Activated CD4-positive, alpha-beta T cell treated with anti-CD3 and anti-CD28 coated beads, Interleukin-2, amount 10 ng/mL, durations not matched to agents 24 days and 14 days (primary cell): ENCODE measurements at regions of chr11 and their contacts with region 1.

Region 1: DNA sequence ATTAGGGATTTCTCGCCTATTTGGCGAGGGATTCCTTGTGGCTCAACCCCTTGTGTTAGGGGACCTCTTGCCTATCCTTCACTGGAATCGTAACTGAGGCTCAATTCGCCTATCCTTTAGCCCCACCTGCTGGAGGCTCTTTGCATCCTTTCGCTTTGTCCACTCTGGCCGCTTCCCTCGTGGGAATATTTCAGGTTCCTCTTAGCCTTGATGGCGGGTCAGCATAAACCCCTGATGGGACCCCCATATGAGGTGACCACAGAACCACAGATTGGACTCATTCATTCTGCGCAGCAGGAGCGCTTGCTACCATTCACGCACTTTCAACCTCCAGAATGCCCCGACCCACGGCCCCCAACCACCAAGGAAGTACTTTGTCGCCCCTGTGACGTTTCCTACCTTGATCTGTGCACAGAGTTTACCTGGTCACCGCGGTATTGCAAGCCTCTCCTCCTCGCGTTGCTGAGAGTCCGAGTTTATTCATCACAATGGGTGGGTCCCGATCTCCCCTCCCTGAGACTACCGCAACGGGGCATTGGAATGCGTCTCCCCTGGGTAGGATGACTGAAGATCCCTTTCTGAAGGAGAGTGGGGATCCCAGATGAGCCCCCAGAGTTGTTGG is at the start of gene OR52N2:
- DNase-seq: peak; percentile 92
- H3K4me3 Mint-ChIP-seq: peak within 1 kb of the TSS; percentile 92
- H3K27ac Mint-ChIP-seq: peak within 1 kb of the TSS; percentile 42
- H3K4me1 Mint-ChIP-seq: peaks cover 10% of the 10 kb centered on the region
- H3K27me3 Mint-ChIP-seq: peaks cover 29% of the 10 kb centered on the region
- total RNA-seq, gene OR52N2: not detected in 2 replicates

Region 2: DNA sequence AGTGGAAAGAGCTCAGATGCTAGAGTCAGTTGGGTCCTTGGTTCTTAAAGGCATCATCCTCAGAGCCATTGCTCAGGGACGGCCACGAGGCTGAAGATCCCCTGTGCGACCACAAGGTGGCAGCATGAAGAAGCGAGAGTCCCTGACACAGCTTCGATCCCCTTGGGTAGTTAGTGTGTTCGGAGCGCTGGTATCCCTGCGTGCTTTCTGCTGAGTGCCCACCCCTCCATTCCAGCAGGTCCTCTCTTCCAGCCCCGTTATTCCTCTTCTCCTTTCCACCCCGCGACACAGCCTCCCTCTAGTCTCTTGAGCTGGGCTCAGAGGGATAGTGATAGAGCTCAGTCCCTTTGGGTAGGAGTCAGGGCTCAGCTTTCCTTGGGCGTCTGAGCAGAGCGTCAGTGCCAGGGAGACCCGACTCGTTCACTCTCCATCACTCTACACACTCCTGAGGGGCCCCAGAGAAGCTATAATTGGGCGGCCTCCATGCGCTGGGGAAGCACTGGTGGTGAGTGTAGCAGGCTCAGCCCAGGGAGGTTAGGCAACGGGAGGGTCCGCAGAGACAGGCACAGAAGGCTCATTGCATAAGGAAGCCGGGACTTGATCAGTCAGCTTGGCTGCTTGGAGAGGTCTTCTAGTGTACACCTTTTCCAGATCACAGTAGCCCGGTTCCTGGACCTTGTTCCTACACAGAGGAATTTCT is 1171.5 kb before region 1 on chr11 and contains the start of gene OR51D1:
- intact Hi-C with region 1: loop called (anchors 10 kb)
- DNase-seq: peak; percentile 90
- H3K4me3 Mint-ChIP-seq: no peak within 1 kb of the TSS
- H3K27ac Mint-ChIP-seq: no peak within 1 kb of the TSS
- H3K4me1 Mint-ChIP-seq: no peaks in the 10 kb centered on the region
- H3K27me3 Mint-ChIP-seq: no peaks in the 10 kb centered on the region
- total RNA-seq, gene OR51D1: not detected in 2 replicates

Region 3: DNA sequence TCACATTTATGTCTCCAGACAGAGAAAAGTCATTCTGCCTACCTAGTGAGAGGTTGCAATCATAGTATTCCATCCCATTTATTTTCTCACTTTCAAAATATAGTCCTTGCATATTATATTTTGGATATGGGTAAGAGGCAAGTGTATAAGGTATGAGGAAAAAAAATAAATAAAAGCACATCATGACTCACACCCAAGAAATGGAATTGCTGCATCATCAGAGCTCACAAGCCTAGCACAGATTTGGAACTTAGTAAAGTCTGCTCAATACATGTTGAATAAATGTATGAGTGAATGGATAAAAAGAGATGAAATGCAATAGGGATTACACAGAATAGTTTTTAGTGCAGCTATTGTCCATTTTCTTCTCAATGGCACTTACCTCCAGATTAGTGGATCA is 882.0 kb before region 1 on chr11:
- intact Hi-C with region 1: no loop called
- DNase-seq: no peak
- H3K4me3 Mint-ChIP-seq: no peak overlapping the region
- H3K27ac Mint-ChIP-seq: no peak overlapping the region
- H3K4me1 Mint-ChIP-seq: no peaks in the 10 kb centered on the region
- H3K27me3 Mint-ChIP-seq: no peaks in the 10 kb centered on the region

Region 4: DNA sequence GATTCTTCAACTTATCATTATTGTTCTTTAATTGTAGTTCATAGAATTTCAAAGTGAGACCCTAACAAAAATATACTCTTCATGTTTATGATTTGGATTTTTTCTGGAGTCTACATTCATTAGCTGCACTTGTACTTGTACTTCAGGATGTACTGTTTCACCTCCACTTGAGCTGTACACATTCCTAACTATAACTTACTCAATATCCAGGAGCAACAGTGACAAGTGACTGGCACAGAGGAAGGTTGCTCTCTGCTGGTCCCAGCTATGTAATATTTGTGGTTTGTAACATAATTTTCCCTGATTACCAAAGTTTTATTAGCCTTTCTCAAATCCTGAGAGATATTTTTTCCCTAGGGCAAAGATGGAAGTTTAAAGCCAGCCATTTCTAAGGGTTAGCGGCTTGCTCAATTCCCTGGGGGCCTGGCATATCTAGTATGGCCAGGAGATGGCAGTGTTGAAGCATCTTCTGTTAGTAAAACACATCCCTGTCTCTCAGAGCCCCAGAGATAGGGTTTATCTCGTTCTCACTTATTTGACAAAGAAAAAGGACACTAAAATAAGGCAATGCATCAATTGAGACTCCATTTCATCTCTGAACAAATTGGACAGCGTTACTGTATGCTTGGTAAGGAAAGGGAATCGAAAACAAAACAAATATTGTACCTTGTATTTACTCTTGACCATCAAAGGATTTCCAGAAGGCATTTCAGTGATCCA is 684.6 kb before region 1 on chr11:
- intact Hi-C with region 1: loop called (anchors 1 kb)
- DNase-seq: peak; percentile 82
- H3K4me3 Mint-ChIP-seq: no peak overlapping the region
- H3K27ac Mint-ChIP-seq: no peak overlapping the region
- H3K4me1 Mint-ChIP-seq: no peaks in the 10 kb centered on the region
- H3K27me3 Mint-ChIP-seq: peaks cover 3% of the 10 kb centered on the region

Region 5: DNA sequence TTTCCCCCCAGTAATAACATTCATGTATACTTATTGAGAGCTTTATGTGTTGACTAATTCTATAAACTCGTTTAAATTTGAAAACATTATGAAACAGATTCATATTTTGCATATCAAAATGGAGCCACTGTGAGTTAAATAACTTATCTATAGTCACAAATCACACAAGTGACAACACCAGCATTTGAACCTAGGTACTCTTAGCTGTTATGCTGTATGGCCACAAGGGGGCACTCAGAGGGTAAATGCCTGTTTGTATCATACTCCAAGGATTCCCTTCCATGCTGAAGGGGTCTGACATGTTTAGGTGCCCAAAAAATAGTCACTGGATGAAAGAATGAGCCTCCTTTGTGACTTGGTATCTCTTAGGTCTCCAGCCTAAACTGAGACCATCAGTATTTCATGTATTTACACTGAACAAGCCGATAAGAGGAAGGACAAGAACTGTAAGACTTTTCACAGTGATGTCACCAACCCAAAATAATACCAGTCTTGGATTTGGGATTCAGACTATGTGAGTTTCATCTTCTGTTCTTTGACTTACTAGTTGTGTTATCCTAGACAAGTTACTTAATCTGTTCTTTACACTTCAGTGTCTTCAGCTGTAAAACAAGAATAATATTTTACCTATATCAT is 332.3 kb before region 1 on chr11:
- intact Hi-C with region 1: loop called (anchors 1 kb)
- DNase-seq: peak; percentile 79
- H3K4me3 Mint-ChIP-seq: no peak overlapping the region
- H3K27ac Mint-ChIP-seq: no peak overlapping the region
- H3K4me1 Mint-ChIP-seq: no peaks in the 10 kb centered on the region
- H3K27me3 Mint-ChIP-seq: peaks cover 15% of the 10 kb centered on the region

Region 6: GRCh38 chr11:5600374-5600851 is 208.2 kb before region 1 on chr11:
- intact Hi-C with region 1: loop called (anchors 1 kb)
- DNase-seq: peak; percentile 86
- H3K4me3 Mint-ChIP-seq: no peak overlapping the region
- H3K27ac Mint-ChIP-seq: no peak overlapping the region
- H3K4me1 Mint-ChIP-seq: peaks cover 10% of the 10 kb centered on the region
- H3K27me3 Mint-ChIP-seq: peaks cover 6% of the 10 kb centered on the region

Region 7: DNA sequence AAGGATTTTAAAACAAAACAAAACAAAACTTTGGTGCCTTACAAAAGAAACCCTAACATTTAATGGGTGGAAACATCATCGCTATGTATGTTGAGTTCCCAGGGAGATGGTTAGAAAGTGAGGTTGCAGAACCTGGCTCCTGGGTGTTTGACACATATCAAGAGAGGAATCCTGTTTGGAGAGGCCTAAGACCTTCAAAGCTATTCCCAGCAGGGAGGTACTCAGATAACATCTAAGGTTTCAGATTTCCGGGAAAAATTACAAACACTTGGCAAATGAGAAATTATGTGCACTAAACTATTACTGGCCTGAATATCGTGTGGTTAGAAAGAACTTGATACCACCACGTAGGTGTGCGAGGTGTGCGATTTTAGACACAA is 142.2 kb before region 1 on chr11:
- intact Hi-C with region 1: no loop called
- DNase-seq: peak; percentile 10
- H3K4me3 Mint-ChIP-seq: no peak overlapping the region
- H3K27ac Mint-ChIP-seq: no peak overlapping the region
- H3K4me1 Mint-ChIP-seq: no peaks in the 10 kb centered on the region
- H3K27me3 Mint-ChIP-seq: no peaks in the 10 kb centered on the region

Region 8: DNA sequence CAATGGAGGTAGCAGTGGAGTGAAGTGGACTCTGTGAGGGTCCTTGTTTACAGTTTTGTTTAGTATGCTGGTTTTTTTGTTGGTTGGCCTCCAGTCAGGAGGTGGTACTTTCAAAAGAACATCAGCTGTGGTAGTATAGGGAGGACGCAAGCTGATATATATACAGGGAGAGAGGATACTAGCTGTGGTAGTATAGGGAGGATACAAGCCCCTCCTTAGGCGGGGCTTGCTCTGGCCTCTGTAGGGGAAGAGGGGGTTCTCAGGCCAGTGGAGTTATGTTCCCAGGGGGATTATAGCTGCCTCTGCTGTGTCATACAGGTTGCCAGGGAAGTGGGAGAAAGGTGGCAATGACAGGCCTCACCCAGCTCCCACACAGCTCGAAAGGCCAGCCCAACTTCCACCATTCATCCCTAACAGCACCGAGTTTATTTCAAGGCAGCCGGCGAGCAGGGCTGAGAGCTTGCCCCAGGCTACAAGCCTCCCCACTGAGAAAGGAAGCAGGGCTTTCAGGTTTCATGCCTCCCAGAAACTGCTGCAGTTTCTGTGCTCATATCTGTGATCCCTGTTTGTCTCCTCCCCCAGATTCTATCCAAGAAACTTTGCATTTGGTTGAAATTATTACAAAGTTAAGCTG is 22.7 kb after region 1 on chr11:
- intact Hi-C with region 1: no loop called
- DNase-seq: no peak
- H3K4me3 Mint-ChIP-seq: no peak overlapping the region
- H3K27ac Mint-ChIP-seq: no peak overlapping the region
- H3K4me1 Mint-ChIP-seq: no peaks in the 10 kb centered on the region
- H3K27me3 Mint-ChIP-seq: peaks cover 12% of the 10 kb centered on the region